AG04449 (cell line): ENCODE measurements at regions of chr2 and their contacts with region 1.

Region 1: DNA sequence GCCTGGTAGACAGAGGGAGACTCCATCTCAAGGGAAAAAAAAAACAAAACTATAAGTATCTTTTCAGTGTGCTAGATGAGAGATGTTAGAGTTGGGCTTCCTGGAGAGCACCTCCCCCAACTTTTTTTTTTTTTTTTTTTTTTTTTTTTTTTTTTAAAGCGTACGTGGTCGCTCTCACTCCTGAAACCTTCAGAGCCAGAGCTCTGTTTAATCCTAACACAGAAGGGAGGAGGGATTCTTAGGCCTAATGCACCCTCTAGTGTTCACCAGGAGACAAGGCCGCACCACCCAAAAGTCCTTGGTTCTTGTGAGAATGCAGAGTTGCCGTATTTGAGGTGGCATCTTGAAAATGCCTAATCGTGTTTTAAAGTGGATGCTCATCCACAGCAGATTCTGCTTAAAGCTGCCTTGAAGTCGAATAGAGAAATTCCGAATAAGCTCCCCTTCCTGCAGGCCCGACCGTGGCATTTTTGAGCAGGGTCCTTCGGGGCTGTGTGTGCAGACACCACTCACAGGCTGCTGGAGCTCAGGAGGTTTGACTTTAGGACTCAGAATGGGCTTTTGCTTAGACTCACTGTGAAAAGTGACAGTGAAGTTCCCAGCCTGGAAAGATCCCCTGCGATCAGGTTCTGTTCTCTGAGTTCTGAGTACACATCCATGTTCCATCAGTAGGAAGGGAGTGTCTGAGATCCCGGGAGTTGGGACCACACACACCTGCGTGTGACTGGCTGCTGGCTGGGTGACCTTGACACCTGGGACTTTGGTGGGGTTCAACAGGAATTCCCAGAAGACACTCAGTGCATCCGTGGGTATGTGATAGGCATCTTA is 252.6 kb downstream of the AGAP1 start:
- DNase-seq: peak; percentile 63
- H3K4me3 ChIP-seq: no peak overlapping the region
- CTCF ChIP-seq: peak; percentile 84

Region 2: GRCh38 chr2:235129850-235130249 is 616.6 kb before region 1 on chr2:
- CTCF ChIA-PET with region 1: interaction called, 74 read pairs
- POLR2A ChIA-PET with region 1: no interaction called
- DNase-seq: no peak
- H3K4me3 ChIP-seq: no peak overlapping the region
- CTCF ChIP-seq: no peak

Region 3: DNA sequence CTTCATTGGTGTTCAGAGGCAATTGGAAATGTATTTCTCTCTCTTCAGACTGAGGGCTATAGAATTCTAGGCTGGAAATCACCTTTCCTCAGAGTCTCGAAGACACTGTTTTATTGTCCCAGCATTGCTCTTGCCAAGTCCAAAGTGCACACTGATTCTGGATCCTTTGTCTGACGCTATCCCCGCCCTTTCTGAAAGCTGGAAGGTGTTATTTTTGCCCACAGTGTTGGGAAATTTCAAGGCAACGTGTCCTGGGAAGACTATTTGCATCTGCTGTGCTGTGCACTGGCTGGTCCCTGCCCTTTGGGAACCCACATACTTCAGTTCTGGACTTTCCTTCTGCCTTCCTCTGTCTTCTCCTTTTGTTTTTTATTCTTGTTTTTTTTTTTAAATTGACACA is 603.9 kb before region 1 on chr2:
- CTCF ChIA-PET with region 1: interaction called, 74 read pairs
- POLR2A ChIA-PET with region 1: no interaction called
- DNase-seq: no peak
- H3K4me3 ChIP-seq: no peak overlapping the region
- CTCF ChIP-seq: no peak

Region 4: DNA sequence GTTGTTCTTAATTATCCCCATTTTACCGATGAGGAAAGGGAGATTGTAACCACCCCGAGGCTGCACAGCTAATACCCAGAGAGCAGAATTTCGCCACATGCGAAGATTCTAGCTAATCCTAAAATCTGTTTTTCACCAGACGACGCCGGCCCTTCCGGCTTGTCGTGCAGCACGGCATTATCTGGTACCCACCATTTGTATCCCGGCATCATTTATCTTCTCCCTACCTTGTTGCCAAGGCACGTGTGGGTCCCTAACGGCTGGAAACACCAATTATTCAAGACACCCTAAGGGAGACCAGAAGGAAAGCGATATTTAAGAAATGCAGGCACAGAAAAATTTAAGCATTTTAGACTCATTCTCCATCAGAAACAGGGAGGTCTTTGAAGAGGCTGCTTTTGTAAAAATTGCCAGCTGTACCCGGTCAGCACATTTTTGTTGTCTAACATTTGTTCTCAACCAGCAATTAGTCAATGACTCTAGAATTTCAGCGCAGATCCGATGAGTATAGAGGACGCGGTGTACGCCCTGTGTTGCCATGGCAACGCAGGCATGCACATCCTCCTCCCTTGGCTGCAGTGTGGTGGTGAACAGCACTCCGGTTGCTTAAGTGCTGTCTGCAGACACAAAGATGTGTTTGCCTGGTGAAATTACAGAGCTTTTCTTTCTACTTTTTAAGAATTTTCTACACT is 141.0 kb before region 1 on chr2:
- CTCF ChIA-PET with region 1: interaction called, 484 read pairs
- POLR2A ChIA-PET with region 1: no interaction called
- DNase-seq: peak; percentile 74
- H3K4me3 ChIP-seq: no peak overlapping the region
- CTCF ChIP-seq: no peak

Region 5: DNA sequence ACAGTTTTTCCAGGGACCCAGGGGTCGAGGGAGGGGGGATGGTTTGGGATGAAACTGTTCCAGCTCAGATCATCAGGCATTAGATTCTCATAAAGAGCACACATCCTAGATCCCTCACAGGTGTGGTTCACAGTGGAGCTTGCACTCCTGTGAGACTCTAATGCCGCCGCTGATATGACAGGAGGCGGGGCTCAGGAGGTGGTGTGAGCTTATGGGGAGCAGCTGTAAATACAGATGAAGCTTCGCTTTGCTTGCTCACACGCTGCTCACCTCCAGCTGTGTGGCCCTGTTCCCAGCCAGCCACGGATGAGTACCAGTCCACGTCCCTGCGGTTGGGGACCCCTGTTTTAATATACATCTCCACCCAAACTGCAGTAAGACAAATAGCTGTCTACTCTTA is 48.4 kb before region 1 on chr2:
- CTCF ChIA-PET with region 1: interaction called, 12 read pairs
- POLR2A ChIA-PET with region 1: interaction called, 3 read pairs
- DNase-seq: no peak
- H3K4me3 ChIP-seq: no peak overlapping the region
- CTCF ChIP-seq: no peak

Region 6: GRCh38 chr2:235734688-235735231 is 11.7 kb before region 1 on chr2:
- CTCF ChIA-PET with region 1: interaction called, 44 read pairs
- POLR2A ChIA-PET with region 1: no interaction called
- DNase-seq: no peak
- H3K4me3 ChIP-seq: no peak overlapping the region
- CTCF ChIP-seq: no peak

Region 7: DNA sequence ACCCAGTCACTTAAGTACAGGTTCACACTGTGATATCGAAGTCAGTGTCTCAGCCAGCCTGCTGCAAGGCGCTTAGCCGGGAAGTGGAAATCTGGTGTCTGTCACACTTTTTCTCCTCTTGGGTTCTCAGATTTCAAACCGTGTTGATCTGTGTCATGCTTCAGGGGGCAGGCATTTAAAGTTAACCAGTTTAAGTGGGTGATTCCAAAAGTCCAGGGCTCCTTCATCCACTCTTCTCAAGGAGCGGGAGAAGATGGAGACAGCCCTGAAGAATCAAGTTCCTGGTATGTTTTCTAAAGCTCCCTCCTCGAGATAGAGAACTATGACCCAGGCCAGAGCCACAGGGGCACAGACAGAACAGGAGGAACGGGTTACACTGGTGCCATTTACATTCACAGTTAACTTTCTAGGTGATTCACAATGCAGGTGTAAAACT is 90.0 kb after region 1 on chr2:
- CTCF ChIA-PET with region 1: no interaction called
- POLR2A ChIA-PET with region 1: no interaction called
- DNase-seq: no peak
- H3K4me3 ChIP-seq: no peak overlapping the region
- CTCF ChIP-seq: no peak